ENCODE measurements at regions of chr1 and their contacts with region 1.

Region 1: GRCh38 chr1:31663622-31664452 is 19.2 kb upstream of the PEF1 start:
- DNase-seq: no peak
- H3K4me3 ChIP-seq: no peak overlapping the region
- H3K27ac ChIP-seq: no peak overlapping the region
- H3K27me3 ChIP-seq: no peaks in the 10 kb centered on the region
- CTCF ChIP-seq: peak; percentile 92

Region 2: GRCh38 chr1:30919025-30919881 is 744.6 kb before region 1 on chr1:
- CTCF ChIA-PET with region 1: no interaction called
- POLR2A ChIA-PET with region 1: no interaction called
- DNase-seq: peak; percentile 55
- H3K4me3 ChIP-seq: no peak overlapping the region
- H3K27ac ChIP-seq: no peak overlapping the region
- H3K27me3 ChIP-seq: no peaks in the 10 kb centered on the region
- CTCF ChIP-seq: peak; percentile 31; the same call in 1 of the 2 replicates

Region 3: GRCh38 chr1:31647106-31647505 is 16.7 kb before region 1 on chr1:
- CTCF ChIA-PET with region 1: no interaction called
- POLR2A ChIA-PET with region 1: no interaction called
- DNase-seq: no peak
- H3K4me3 ChIP-seq: no peak overlapping the region
- H3K27ac ChIP-seq: no peak overlapping the region
- H3K27me3 ChIP-seq: no peaks in the 10 kb centered on the region
- CTCF ChIP-seq: no peak

Region 4: GRCh38 chr1:31789259-31790065 is 125.6 kb after region 1 on chr1:
- CTCF ChIA-PET with region 1: interaction called, 52 read pairs
- POLR2A ChIA-PET with region 1: interaction called, 10 read pairs
- DNase-seq: peak; percentile 80
- H3K4me3 ChIP-seq: peak overlapping the region; percentile 87
- H3K27ac ChIP-seq: peak overlapping the region; percentile 81
- H3K27me3 ChIP-seq: no peaks in the 10 kb centered on the region
- CTCF ChIP-seq: peak; percentile 94